ENCODE measurements at regions of chr5 and their contacts with region 1.

Region 1: DNA sequence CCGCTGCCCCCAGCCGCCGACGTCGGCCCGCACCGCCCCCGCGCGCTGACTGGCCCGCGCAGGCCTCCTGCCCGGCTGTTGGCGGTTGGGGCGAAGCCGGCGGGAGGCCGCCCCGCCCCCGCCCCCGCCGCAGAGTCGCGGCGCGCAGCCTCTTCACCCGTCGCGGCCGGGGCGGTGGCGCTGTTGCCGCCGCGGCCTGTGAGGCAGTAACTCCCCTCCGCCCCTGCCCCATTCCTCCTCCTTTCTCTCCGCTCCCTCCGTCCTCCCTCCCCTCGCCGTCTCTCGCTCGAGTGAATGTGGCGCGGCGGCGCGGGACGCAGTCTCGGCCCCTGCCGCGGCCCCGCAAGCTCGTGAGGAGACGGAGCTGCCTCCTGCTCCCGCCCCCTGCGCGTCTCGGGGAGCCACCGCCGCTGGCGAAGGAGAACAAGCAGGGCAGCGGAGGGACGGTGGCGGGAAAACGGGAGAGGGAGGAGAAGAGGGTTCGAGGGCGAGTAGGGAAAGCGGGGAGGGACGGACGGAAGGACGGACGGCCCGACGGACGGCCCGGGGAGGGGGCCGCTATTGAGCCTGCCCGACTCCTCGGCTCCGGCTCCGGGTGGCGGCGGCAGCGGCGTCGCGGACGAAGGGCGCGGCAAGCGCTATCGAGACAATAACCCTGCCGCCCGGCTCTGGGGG is 637 bp upstream of the ERBIN start:
- DNase-seq: peak; percentile 81 to 93
- ATAC-seq: peak; percentile 67 to 83 (median 77)
- H3K4me3 ChIP-seq: peak overlapping the region; percentile 68
- H3K4me3 Mint-ChIP-seq: peak overlapping the region; percentile 90
- H3K27ac ChIP-seq: peak overlapping the region; percentile 98
- H3K27ac Mint-ChIP-seq: peak overlapping the region; percentile 89 to 96
- H3K4me1 ChIP-seq: peaks cover 19% of the 10 kb centered on the region
- H3K4me1 Mint-ChIP-seq: peaks cover 40 to 66% of the 10 kb centered on the region in 2 donors
- H3K27me3 ChIP-seq: no peaks in the 10 kb centered on the region
- H3K27me3 Mint-ChIP-seq: no peaks in the 10 kb centered on the region
- CTCF ChIP-seq: no peak

Region 2: DNA sequence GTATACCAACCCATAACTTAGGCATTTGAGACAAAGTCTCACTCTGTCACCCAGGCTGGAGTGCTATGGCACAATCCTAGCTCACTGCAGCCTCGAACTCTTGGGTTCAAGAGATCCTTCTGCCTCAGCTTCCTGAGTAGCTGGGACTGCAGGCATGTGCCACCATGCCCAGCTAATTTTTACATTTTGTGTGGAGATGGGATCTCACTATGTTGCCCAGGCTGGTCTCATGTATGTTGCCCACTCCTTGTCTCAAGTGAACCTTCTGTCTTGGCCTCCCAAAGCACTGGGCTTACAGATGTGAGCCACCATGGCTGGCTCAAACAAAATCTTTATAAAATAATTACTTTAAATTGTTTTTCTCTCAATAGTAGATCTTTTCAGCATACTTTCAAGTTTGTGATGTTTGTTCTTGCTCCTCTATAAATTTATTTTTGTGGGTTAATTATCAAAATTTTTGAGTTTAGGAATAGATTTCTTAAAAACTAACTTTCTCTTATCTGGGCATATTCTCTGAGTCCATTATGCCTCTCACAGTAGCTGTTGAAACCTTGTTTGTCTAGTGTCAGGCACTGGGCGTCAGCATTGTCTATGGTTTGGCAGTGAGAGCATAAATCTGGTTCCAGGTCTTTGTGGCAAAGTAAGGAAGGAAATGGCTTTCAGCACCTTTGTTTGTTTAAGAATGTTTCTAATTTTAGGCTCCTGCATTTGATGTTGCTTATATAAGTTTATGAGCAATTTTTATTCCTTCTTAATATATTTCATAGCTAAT is 165.0 kb before region 1 on chr5:
- intact Hi-C with region 1: loop called (anchors 10 kb)
- DNase-seq: peak; percentile 34 to 83
- ATAC-seq: peak; percentile 89 to 100 (median 100)
- H3K4me3 ChIP-seq: no peak overlapping the region
- H3K4me3 Mint-ChIP-seq: no peak overlapping the region
- H3K27ac ChIP-seq: no peak overlapping the region
- H3K27ac Mint-ChIP-seq: no peak overlapping the region
- H3K4me1 ChIP-seq: peaks cover 8% of the 10 kb centered on the region
- H3K4me1 Mint-ChIP-seq: peaks cover 6% of the 10 kb centered on the region in 2 donors
- H3K27me3 ChIP-seq: no peaks in the 10 kb centered on the region
- H3K27me3 Mint-ChIP-seq: peaks cover 0 to 9% of the 10 kb centered on the region in 2 donors
- CTCF ChIP-seq: peak; percentile 62

Region 3: GRCh38 chr5:65861830-65862241 is 63.9 kb before region 1 on chr5:
- intact Hi-C with region 1: no loop called
- DNase-seq: no peak
- ATAC-seq: no peak
- H3K4me3 ChIP-seq: no peak overlapping the region
- H3K4me3 Mint-ChIP-seq: no peak overlapping the region
- H3K27ac ChIP-seq: no peak overlapping the region
- H3K27ac Mint-ChIP-seq: no peak overlapping the region
- H3K4me1 ChIP-seq: no peaks in the 10 kb centered on the region
- H3K4me1 Mint-ChIP-seq: peaks cover 6 to 7% of the 10 kb centered on the region in 2 donors
- H3K27me3 ChIP-seq: no peaks in the 10 kb centered on the region
- H3K27me3 Mint-ChIP-seq: peaks cover 6 to 7% of the 10 kb centered on the region in 2 donors
- CTCF ChIP-seq: no peak

Region 4: DNA sequence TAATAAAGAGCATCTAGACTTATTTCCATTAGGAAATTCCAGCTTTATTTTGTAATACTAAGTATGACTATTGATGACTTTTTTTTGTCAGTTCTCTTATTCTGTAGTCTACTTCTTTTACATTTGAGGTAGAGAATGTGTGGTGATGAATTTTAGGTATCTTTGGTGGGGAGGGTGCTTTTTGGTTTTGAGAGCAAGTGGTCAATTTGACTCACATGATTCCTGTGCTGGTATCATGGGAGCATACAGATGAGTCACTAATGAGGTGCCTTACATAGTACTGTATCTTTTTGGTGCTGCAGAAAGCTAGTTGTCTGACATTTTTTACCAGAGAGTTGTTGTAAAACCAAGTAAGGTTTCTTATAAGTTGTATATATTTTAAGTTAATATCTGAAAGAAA is 35.9 kb after region 1 on chr5:
- intact Hi-C with region 1: loop called (anchors 5 kb)
- DNase-seq: no peak
- ATAC-seq: peak in 2 of 3 donors; percentile 79 to 83
- H3K4me3 ChIP-seq: no peak overlapping the region
- H3K4me3 Mint-ChIP-seq: peak overlapping the region; percentile 2
- H3K27ac ChIP-seq: no peak overlapping the region
- H3K27ac Mint-ChIP-seq: peak overlapping the region; percentile 57 to 84
- H3K4me1 ChIP-seq: peaks cover 14% of the 10 kb centered on the region
- H3K4me1 Mint-ChIP-seq: peaks cover 54 to 71% of the 10 kb centered on the region in 2 donors
- H3K27me3 ChIP-seq: no peaks in the 10 kb centered on the region
- H3K27me3 Mint-ChIP-seq: no peaks in the 10 kb centered on the region
- CTCF ChIP-seq: no peak

Region 5: DNA sequence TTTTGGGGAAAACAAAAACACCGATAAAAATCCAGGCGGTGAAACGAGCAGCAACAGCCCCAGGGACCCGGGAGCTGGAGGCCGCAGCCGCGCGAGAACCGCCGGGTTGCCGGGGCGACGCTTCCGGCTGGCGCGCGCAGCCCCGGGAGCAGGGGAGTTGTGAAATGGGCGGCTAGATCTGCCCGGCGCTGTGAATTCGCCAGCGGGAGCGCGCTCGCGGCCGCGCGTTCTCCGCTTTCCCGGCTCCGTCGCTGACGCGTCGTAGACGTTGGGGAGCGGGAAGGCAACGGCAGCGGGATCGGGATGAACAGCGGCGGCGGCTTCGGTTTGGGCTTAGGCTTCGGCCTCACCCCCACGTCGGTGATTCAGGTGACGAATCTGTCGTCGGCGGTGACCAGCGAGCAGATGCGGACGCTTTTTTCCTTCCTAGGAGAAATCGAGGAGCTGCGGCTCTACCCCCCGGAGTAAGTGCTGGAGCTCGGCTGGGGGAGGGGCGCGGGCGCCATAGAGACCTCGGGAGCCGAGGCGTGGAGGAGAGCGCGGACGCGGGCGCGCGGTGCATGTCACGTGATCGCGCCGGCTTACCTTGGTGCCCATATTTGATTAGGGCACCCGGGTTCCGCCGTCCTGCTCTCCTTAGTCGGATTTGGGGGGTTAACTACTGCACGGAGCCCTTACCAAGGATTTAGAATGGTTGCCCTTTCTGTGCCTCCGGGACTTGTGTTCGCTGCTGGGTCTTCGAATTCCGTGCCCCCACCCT is 218.5 kb after region 1 on chr5 and contains the start of gene SREK1:
- intact Hi-C with region 1: loop called (anchors 1 kb)
- DNase-seq: peak; percentile 87 to 93
- ATAC-seq: peak; percentile 84 to 93 (median 88)
- H3K4me3 ChIP-seq: peak within 1 kb of the TSS; percentile 91
- H3K4me3 Mint-ChIP-seq: peak within 1 kb of the TSS; percentile 99
- H3K27ac ChIP-seq: peak within 1 kb of the TSS; percentile 98
- H3K27ac Mint-ChIP-seq: peak within 1 kb of the TSS; percentile 99 to 100
- H3K4me1 ChIP-seq: peaks cover 4% of the 10 kb centered on the region
- H3K4me1 Mint-ChIP-seq: peaks cover 34 to 36% of the 10 kb centered on the region in 2 donors
- H3K27me3 ChIP-seq: no peaks in the 10 kb centered on the region
- H3K27me3 Mint-ChIP-seq: no peaks in the 10 kb centered on the region
- CTCF ChIP-seq: no peak
- total RNA-seq, gene SREK1: 151 to 177 (median 168) TPM

Measured in natural killer cell (primary cell).